ENCODE measurements at regions of chr7 and their contacts with region 1.

Region 1: DNA sequence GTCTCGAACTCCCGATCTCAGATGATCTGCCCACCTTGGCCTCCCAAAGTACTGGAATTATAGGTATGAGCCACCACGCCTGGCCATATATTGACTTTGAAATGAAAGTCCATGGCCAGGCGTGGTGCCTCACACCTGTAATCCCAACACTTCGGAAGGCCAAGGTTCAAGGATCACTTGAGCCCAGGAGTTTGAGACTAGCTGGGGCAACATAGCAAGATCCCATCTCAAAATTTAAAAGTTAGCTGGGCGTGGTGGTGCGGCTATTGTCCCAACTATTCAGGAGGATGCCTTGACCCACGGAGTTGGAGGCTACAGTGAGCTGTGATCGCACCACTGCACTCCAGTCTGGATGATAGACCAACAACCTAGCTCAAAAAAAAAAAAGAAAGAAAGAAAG is 6.0 kb upstream of the CCZ1 start:
- DNase-seq: no peak

Region 2: GRCh38 chr7:5850944-5851343 is 41.6 kb before region 1 on chr7:
- intact Hi-C with region 1: loop called in 1 of 2 experiments (anchors 2 kb)
- DNase-seq: no peak

Region 3: GRCh38 chr7:6375348-6376101 is 483.0 kb after region 1 on chr7:
- intact Hi-C with region 1: no loop called
- DNase-seq: no peak